ENCODE measurements at regions of chr4 and their contacts with region 1.

Region 1: GRCh38 chr4:99885063-99885664 is 9.1 kb downstream of the LAMTOR3 start:
- DNase-seq: no peak
- H3K4me3 ChIP-seq: no peak overlapping the region
- H3K27ac ChIP-seq: no peak overlapping the region
- H3K4me1 ChIP-seq: no peaks in the 10 kb centered on the region
- H3K27me3 ChIP-seq: no peaks in the 10 kb centered on the region
- CTCF ChIP-seq: peak; percentile 53 to 60 (median 56)
- EP300 ChIP-seq: no peak
- POLR2A ChIP-seq: no peak

Region 2: GRCh38 chr4:99723612-99724011 is 161.6 kb before region 1 on chr4:
- intact Hi-C with region 1: loop called in 1 of 4 experiments (anchors 10 kb)
- DNase-seq: peak; percentile 42 to 66 (median 46)
- H3K4me3 ChIP-seq: no peak overlapping the region
- H3K27ac ChIP-seq: peak overlapping the region in 1 of 2 donors; percentile 57
- H3K4me1 ChIP-seq: peaks cover 9% of the 10 kb centered on the region
- H3K27me3 ChIP-seq: no peaks in the 10 kb centered on the region
- CTCF ChIP-seq: no peak
- EP300 ChIP-seq: no peak
- POLR2A ChIP-seq: no peak

Region 3: GRCh38 chr4:100034023-100034664 is 149.0 kb after region 1 on chr4:
- intact Hi-C with region 1: no loop called
- DNase-seq: no peak
- H3K4me3 ChIP-seq: no peak overlapping the region
- H3K27ac ChIP-seq: no peak overlapping the region
- H3K4me1 ChIP-seq: no peaks in the 10 kb centered on the region
- H3K27me3 ChIP-seq: no peaks in the 10 kb centered on the region
- CTCF ChIP-seq: no peak
- EP300 ChIP-seq: no peak
- POLR2A ChIP-seq: no peak